Activated CD4-positive, alpha-beta memory T cell treated with anti-CD3 and anti-CD28 coated beads, Interleukin-2, amount 10 ng/mL, durations not matched to agents 7 days and 5 days (primary cell): ENCODE measurements at regions of chr12 and their contacts with region 1.

Region 1: DNA sequence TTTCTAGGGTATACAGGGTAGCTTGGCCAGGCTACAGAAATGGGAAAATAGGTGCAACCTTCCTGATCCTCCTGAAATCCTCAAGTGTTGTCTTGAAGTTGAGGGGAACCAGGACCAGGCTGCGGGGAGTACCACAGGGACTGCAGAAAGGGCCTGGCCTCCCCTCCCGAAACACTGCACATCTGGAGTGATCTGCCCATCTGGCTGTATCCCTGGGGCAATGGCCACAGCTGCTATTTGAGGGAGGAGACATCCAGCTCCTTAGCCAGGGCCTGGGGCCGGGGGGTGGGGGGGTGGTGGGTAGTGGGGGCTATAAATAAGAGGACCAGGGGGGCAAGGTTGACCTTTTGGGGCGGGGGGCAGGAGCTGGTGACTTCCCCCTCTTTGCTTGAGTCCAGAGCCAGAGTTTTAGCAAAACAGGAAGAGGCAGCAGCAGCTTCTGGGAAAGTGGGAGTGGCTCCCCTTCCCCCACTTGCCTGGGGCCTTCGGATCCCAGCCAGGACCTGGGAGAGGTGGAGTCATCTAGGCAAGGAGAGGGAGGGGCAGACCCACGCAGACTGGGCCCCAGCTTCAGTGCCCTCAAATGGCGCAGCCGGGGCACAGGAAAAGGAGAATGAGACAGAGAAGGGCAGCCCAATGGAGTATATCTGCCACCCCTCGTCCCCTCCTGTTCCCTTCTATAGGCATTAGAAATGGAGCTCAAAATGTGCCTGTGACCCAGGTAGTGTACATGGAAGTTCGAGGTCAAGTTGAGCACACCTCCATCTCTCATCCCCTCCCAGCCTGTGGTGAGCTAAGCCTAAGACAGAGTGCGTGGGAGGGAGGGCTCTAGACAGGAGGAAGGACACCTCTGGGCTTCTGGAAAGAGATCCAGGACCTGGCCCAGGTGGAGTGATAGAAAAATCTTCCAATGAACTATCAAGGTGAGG is 9.2 kb upstream of the HDAC7 start:
- DNase-seq: no peak
- H3K4me3 Mint-ChIP-seq: no peak overlapping the region
- H3K27ac Mint-ChIP-seq: peak overlapping the region; percentile 70
- H3K4me1 Mint-ChIP-seq: peaks cover 89% of the 10 kb centered on the region
- H3K27me3 Mint-ChIP-seq: no peaks in the 10 kb centered on the region

Region 2: GRCh38 chr12:47882781-47883546 is 54.1 kb after region 1 on chr12:
- CTCF ChIA-PET with region 1: no interaction called
- POLR2A ChIA-PET with region 1: interaction called, 17 read pairs
- DNase-seq: peak; percentile 59
- H3K4me3 Mint-ChIP-seq: peak overlapping the region; percentile 80
- H3K27ac Mint-ChIP-seq: peak overlapping the region; percentile 98
- H3K4me1 Mint-ChIP-seq: peaks cover 83% of the 10 kb centered on the region
- H3K27me3 Mint-ChIP-seq: no peaks in the 10 kb centered on the region